GM10248 (cell line): ENCODE measurements at regions of chr18 and their contacts with region 1.

Region 1: GRCh38 chr18:23131693-23132319 is 3.5 kb upstream of the CABLES1 start:
- DNase-seq: peak; percentile 76
- CTCF ChIP-seq: peak; percentile 68

Region 2: GRCh38 chr18:23106580-23106979 is 25.2 kb before region 1 on chr18:
- CTCF ChIA-PET with region 1: interaction called, 19 read pairs
- POLR2A ChIA-PET with region 1: no interaction called
- DNase-seq: no peak
- CTCF ChIP-seq: no peak

Region 3: DNA sequence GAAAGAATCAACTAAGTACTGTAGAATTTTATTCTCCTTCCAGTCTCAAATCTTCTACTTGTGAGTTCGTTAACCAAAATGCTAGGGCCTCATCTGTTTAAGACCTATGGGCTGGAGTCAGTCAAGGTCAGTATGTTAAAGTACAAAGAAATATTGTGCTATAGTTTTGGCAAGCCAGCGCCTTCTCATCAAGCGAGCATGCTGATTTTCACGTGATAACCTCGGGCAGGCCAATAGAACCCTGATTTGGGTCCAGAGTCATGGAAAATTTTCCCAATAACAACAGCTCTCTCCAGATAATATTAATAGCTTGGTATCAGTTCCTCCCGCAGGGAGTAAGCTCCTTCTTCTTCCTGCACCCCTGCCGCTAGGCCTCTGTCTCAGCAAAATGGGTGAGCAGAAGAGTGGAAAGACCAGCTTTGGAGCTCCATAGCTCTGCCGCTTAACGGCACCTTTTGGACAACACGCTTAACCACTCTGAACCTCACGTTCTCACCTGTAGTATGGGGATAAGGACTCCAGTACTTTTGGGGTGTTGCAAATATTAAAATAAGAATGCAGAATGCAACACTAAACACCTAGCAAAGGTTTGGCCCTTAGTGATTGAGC is 15.2 kb after region 1 on chr18:
- CTCF ChIA-PET with region 1: interaction called, 11 read pairs
- POLR2A ChIA-PET with region 1: no interaction called
- DNase-seq: no peak
- CTCF ChIP-seq: no peak

Region 4: GRCh38 chr18:23377669-23378301 is 246.0 kb after region 1 on chr18:
- CTCF ChIA-PET with region 1: interaction called, 30 read pairs
- POLR2A ChIA-PET with region 1: no interaction called
- DNase-seq: peak; percentile 64
- CTCF ChIP-seq: no peak

Region 5: DNA sequence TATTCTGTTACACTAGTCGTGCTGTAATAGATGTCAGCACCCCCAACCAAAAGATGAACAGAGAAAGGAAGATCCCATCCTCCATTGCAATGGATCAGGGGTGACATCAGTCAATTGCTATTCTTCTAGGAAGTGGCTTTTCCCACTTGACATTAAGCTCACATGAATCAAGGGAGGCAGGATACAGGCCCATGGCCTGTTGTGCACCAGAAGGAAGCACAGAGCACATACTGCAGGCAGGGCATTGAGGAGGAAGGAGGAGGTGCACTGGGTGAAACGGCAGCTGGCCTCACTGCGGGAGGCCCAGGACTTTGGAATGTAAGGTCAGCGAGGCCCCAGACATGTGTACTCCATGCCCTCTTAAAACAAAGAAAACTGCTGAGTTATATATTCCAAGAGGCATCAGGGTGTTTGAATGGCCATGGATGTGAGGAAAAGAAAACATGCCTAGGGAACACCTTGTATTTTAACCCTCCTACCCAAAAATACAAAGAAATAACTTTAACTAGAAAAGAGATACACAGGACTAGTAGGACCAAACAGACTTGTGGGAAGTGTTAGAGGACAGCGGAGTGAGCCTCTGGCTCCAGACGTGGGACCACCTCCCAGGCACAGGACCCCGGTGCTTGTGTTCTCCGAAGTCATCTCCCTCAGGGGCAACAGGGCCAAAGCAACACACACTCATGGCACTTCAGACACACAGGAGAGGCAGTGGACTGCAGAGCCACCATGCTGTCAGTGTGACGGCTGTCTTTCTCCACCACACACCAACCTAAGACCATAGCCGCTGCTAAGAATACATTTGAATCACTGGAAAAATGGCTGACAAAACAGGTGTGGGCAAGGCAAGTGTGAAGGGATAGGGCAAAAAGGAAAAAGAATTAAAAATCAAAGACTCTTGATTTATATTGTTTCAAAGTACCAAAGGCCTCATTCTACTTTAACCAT is 269.9 kb after region 1 on chr18:
- CTCF ChIA-PET with region 1: interaction called, 15 read pairs
- POLR2A ChIA-PET with region 1: no interaction called
- DNase-seq: no peak
- CTCF ChIP-seq: no peak